ENCODE measurements at regions of chr13 and their contacts with region 1.

Region 1: DNA sequence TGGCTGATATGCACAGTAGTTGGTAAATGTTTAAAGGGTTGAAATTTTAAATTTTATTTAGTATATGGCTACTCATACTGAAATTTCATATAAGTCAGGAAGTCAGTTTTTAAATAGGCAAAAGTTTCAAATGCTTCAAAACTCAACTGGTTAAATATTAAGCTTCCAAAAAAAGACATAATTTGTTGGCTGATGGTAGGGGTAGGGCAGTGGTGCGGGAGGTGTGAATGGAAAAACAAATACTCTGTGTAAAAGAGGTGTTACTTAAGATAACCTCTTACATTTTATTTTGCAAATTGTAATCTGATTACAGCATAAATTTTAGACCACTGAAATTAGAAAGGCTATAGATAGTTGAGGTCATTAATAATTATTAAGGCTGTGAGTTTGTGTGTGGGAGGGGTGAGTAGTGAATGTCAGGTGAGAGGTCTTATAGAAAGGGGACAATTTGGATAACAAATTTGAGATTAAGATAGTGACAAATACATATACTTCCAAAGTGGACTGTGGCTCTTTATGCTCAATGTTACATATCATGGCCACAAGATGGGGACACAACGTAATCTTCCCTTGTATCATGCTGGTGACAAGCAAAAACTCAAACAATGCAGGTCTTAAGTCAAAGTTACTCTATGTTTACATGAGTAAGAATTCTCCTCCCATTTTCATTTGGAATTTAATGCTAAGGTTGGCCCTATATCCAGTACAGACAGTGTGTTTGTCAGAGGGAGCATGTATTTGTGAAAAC is 36.6 kb upstream of the OXGR1 start:
- DNase-seq: peak; percentile 46
- ATAC-seq: peak; percentile 85
- H3K4me3 ChIP-seq: no peak overlapping the region
- H3K27ac ChIP-seq: no peak overlapping the region
- H3K4me1 ChIP-seq: peaks cover 0 to 2% of the 10 kb centered on the region in 2 experiments; a peak in 1 of 4 replicates
- H3K27me3 ChIP-seq: no peaks in the 10 kb centered on the region
- CTCF ChIP-seq: peak; percentile 52 to 56 (median 56); a peak in 5 of 6 replicates
- POLR2A ChIP-seq: no peak
- RAD21 ChIP-seq: peak; percentile 69

Region 2: GRCh38 chr13:96851856-96852445 is 178.9 kb before region 1 on chr13:
- CTCF ChIA-PET with region 1: no interaction called
- POLR2A ChIA-PET with region 1: no interaction called
- RAD21 ChIA-PET with region 1: no interaction called
- intact Hi-C with region 1: no loop called
- DNase-seq: no peak
- ATAC-seq: no peak
- H3K4me3 ChIP-seq: no peak overlapping the region
- H3K27ac ChIP-seq: no peak overlapping the region
- H3K4me1 ChIP-seq: no peaks in the 10 kb centered on the region
- H3K27me3 ChIP-seq: peaks cover 17% of the 10 kb centered on the region; the same call in 1 of the 2 replicates
- CTCF ChIP-seq: no peak
- POLR2A ChIP-seq: no peak
- RAD21 ChIP-seq: no peak

Region 3: GRCh38 chr13:96898212-96898611 is 132.7 kb before region 1 on chr13:
- CTCF ChIA-PET with region 1: no interaction called
- POLR2A ChIA-PET with region 1: no interaction called
- RAD21 ChIA-PET with region 1: no interaction called
- intact Hi-C with region 1: no loop called
- DNase-seq: no peak
- ATAC-seq: no peak
- H3K4me3 ChIP-seq: no peak overlapping the region
- H3K27ac ChIP-seq: no peak overlapping the region
- H3K4me1 ChIP-seq: no peaks in the 10 kb centered on the region
- H3K27me3 ChIP-seq: peaks cover 23% of the 10 kb centered on the region; the same call in 1 of the 2 replicates
- CTCF ChIP-seq: no peak
- POLR2A ChIP-seq: no peak
- RAD21 ChIP-seq: no peak

Region 4: GRCh38 chr13:97198753-97199152 is 167.9 kb after region 1 on chr13:
- CTCF ChIA-PET with region 1: no interaction called
- POLR2A ChIA-PET with region 1: no interaction called
- RAD21 ChIA-PET with region 1: no interaction called
- intact Hi-C with region 1: no loop called
- DNase-seq: no peak
- ATAC-seq: no peak
- H3K4me3 ChIP-seq: no peak overlapping the region
- H3K27ac ChIP-seq: no peak overlapping the region
- H3K4me1 ChIP-seq: peaks cover 18 to 37% of the 10 kb centered on the region in 2 experiments
- H3K27me3 ChIP-seq: no peaks in the 10 kb centered on the region
- CTCF ChIP-seq: no peak
- POLR2A ChIP-seq: no peak
- RAD21 ChIP-seq: no peak

Region 5: GRCh38 chr13:97212601-97213040 is 181.7 kb after region 1 on chr13:
- CTCF ChIA-PET with region 1: no interaction called
- POLR2A ChIA-PET with region 1: no interaction called
- RAD21 ChIA-PET with region 1: no interaction called
- intact Hi-C with region 1: loop called (anchors 1 kb)
- DNase-seq: no peak
- ATAC-seq: peak; percentile 95
- H3K4me3 ChIP-seq: no peak overlapping the region
- H3K27ac ChIP-seq: no peak overlapping the region
- H3K4me1 ChIP-seq: peaks cover 5 to 12% of the 10 kb centered on the region in 2 experiments; a peak in 2 of 4 replicates
- H3K27me3 ChIP-seq: no peaks in the 10 kb centered on the region
- CTCF ChIP-seq: peak; percentile 58 to 79 (median 76); a peak in 5 of 6 replicates
- POLR2A ChIP-seq: no peak
- RAD21 ChIP-seq: peak; percentile 76

Region 6: GRCh38 chr13:97359181-97360057 is 328.5 kb after region 1 on chr13:
- CTCF ChIA-PET with region 1: no interaction called
- POLR2A ChIA-PET with region 1: no interaction called
- RAD21 ChIA-PET with region 1: no interaction called
- intact Hi-C with region 1: loop called (anchors 2 kb)
- DNase-seq: peak; percentile 44
- ATAC-seq: peak; percentile 94
- H3K4me3 ChIP-seq: no peak overlapping the region
- H3K27ac ChIP-seq: peak overlapping the region; percentile 28; the same call in 1 of the 2 replicates
- H3K4me1 ChIP-seq: no peaks in the 10 kb centered on the region
- H3K27me3 ChIP-seq: no peaks in the 10 kb centered on the region
- CTCF ChIP-seq: peak; percentile 71 to 94 (median 72); a peak in 5 of 6 replicates
- POLR2A ChIP-seq: no peak
- RAD21 ChIP-seq: peak; percentile 87

Region 7: GRCh38 chr13:97567510-97568243 is 536.8 kb after region 1 on chr13:
- CTCF ChIA-PET with region 1: no interaction called
- POLR2A ChIA-PET with region 1: no interaction called
- RAD21 ChIA-PET with region 1: no interaction called
- intact Hi-C with region 1: loop called (anchors 5 kb)
- DNase-seq: peak; percentile 40
- ATAC-seq: peak; percentile 90
- H3K4me3 ChIP-seq: peak overlapping the region in 1 of 2 experiments; percentile 38; a peak in 2 of 4 replicates
- H3K27ac ChIP-seq: 0 out of 2 replicates have a peak overlapping the region, but pooled peaks have one; percentile 29
- H3K4me1 ChIP-seq: peaks cover 16 to 22% of the 10 kb centered on the region in 2 experiments
- H3K27me3 ChIP-seq: no peaks in the 10 kb centered on the region
- CTCF ChIP-seq: no peak
- POLR2A ChIP-seq: no peak
- RAD21 ChIP-seq: no peak

Measured in HCT116 (cell line).